IMR-90 (cell line): ENCODE measurements at regions of chr2 and their contacts with region 1.

Region 1: GRCh38 chr2:18362696-18363349 is 197.6 kb downstream of the RDH14 start:
- DNase-seq: peak; percentile 98
- ATAC-seq: peak; percentile 90
- H3K4me3 ChIP-seq: no peak overlapping the region
- H3K27ac ChIP-seq: peak overlapping the region; percentile 30
- H3K4me1 ChIP-seq: peaks cover 18% of the 10 kb centered on the region
- H3K27me3 ChIP-seq: no peaks in the 10 kb centered on the region
- CTCF ChIP-seq: no peak
- POLR2A ChIP-seq: no peak
- RAD21 ChIP-seq: no peak

Region 2: GRCh38 chr2:17976871-17977746 is 385.7 kb before region 1 on chr2:
- CTCF ChIA-PET with region 1: no interaction called
- POLR2A ChIA-PET with region 1: no interaction called
- dilution Hi-C with region 1: no loop called
- in situ Hi-C with region 1: loop called (anchors 10 kb)
- intact Hi-C with region 1: loop called (anchors 5 kb)
- DNase-seq: peak; percentile 100
- ATAC-seq: peak; percentile 92
- H3K4me3 ChIP-seq: peak overlapping the region; percentile 1; the same call in 1 of the 2 replicates
- H3K27ac ChIP-seq: peak overlapping the region; percentile 50
- H3K4me1 ChIP-seq: peaks cover 19% of the 10 kb centered on the region
- H3K27me3 ChIP-seq: no peaks in the 10 kb centered on the region
- CTCF ChIP-seq: no peak
- POLR2A ChIP-seq: no peak
- RAD21 ChIP-seq: no peak; the same call in 1 of the 2 replicates

Region 3: DNA sequence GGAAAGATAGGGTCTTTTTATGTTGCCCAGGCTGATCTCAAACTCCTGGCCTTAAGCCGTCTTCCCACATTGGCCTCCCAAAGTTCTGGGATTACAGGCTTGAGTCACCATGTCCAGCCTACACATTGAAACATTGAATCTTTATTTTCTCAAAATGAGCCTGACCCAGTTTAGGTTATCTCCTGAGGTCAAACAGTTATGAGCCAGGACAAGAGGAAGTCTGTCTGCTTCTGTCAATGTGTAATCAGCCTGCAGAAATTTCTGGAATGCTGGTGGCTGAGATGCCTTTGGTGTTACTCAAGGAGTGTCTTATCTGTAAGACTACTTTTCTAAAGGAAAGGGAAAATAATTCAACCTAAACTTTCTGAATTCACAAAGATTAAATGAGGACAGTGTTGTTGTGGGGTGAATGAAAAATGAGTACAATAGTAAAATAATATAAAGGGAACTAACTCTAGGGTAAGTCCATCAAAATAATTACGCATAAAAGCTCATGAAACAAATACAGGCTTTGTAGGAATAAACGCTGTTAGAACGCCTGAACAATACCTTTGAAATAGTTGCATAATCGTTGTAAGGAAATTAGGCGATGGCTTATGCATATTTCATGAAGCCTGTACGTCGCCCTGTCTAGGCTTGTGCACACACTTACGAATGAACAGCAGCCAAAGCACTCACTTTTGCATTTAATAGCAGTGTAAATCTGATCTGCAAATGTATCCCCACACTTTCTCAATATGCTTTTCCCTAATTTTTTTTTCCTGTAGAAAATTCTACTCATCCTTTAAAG is 63.2 kb before region 1 on chr2:
- CTCF ChIA-PET with region 1: no interaction called
- POLR2A ChIA-PET with region 1: no interaction called
- dilution Hi-C with region 1: no loop called
- in situ Hi-C with region 1: no loop called
- intact Hi-C with region 1: loop called (anchors 1 kb)
- DNase-seq: peak; percentile 96
- ATAC-seq: peak; percentile 91
- H3K4me3 ChIP-seq: no peak overlapping the region
- H3K27ac ChIP-seq: peak overlapping the region; percentile 76
- H3K4me1 ChIP-seq: peaks cover 5% of the 10 kb centered on the region
- H3K27me3 ChIP-seq: no peaks in the 10 kb centered on the region
- CTCF ChIP-seq: no peak
- POLR2A ChIP-seq: no peak
- RAD21 ChIP-seq: no peak; the same call in 1 of the 2 replicates